Heart left ventricle (tissue), 16 donors: ENCODE measurements at regions of chr15 and their contacts with region 1.

Region 1: DNA sequence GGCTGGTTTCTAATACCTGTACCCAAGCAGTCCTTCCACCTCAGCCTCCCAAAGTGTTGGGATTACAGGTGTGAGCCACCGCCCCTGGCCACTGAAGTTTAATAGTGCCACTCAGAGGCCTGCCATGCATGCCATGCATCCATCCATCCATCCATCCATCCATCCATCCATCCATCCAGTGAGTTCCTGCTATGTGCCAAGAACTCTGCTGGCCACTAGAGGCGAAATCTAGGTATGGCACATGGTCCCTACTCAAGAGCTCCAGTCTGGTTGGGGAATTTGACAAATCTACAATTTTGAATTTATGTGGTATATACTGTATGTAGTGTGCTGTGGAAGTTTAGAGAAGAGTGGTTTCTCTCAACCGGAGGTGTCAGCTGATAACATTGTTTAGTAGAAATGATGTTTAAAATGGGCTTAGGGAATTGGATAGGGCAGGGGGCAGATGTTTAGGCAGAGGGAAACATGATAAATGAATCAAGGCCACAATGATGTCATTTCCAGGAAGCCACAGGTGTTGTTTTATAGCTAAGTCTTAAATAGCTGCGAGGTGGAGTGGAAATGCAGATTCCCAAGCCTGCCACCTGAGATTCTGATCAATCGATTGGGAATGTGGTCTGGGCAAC is 384.4 kb upstream of the C2CD4B start:
- DNase-seq: no peak
- ATAC-seq: no peak
- H3K4me3 ChIP-seq: no peak overlapping the region
- H3K27ac ChIP-seq: no peak overlapping the region
- H3K4me1 ChIP-seq: peaks cover 3 to 52% (median 32%) of the 10 kb centered on the region in 12 donors
- H3K27me3 ChIP-seq: no peaks in the 10 kb centered on the region
- CTCF ChIP-seq: peak; percentile 9 to 58 (median 31)
- POLR2A ChIP-seq: no peak

Region 2: DNA sequence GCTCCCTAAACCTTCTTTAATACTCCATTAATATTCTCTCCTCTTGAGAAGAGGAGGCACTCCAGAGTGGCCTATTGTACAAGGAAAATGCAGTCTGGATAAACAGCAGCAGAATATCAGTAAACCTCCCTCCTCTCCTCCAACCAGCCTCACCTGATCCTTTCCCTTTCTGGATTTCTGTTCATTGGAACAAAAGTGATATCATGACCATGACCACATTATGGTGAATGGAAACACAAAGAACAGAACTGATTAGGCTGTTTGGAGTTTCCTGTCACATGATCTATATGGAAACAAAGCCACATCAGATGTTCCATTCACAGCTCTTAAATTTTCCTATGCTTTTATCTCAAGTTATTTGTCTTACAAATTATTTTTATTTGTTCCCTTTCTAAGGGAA is 399.0 kb before region 1 on chr15:
- intact Hi-C with region 1: no loop called
- DNase-seq: no peak
- ATAC-seq: no peak
- H3K4me3 ChIP-seq: no peak overlapping the region
- H3K27ac ChIP-seq: no peak overlapping the region
- H3K4me1 ChIP-seq: no peaks in the 10 kb centered on the region
- H3K27me3 ChIP-seq: no peaks in the 10 kb centered on the region
- CTCF ChIP-seq: no peak
- POLR2A ChIP-seq: no peak

Region 3: GRCh38 chr15:62444104-62445022 is 105.1 kb before region 1 on chr15:
- intact Hi-C with region 1: no loop called
- DNase-seq: peak in 1 of 5 donors; percentile 55
- ATAC-seq: peak in 3 of 4 donors; percentile 44 to 77 (median 60)
- H3K4me3 ChIP-seq: no peak overlapping the region
- H3K27ac ChIP-seq: peak overlapping the region in 1 of 12 donors; percentile 15
- H3K4me1 ChIP-seq: peaks cover 0 to 44% (median 14%) of the 10 kb centered on the region in 12 donors
- H3K27me3 ChIP-seq: no peaks in the 10 kb centered on the region
- CTCF ChIP-seq: no peak
- POLR2A ChIP-seq: no peak

Region 4: DNA sequence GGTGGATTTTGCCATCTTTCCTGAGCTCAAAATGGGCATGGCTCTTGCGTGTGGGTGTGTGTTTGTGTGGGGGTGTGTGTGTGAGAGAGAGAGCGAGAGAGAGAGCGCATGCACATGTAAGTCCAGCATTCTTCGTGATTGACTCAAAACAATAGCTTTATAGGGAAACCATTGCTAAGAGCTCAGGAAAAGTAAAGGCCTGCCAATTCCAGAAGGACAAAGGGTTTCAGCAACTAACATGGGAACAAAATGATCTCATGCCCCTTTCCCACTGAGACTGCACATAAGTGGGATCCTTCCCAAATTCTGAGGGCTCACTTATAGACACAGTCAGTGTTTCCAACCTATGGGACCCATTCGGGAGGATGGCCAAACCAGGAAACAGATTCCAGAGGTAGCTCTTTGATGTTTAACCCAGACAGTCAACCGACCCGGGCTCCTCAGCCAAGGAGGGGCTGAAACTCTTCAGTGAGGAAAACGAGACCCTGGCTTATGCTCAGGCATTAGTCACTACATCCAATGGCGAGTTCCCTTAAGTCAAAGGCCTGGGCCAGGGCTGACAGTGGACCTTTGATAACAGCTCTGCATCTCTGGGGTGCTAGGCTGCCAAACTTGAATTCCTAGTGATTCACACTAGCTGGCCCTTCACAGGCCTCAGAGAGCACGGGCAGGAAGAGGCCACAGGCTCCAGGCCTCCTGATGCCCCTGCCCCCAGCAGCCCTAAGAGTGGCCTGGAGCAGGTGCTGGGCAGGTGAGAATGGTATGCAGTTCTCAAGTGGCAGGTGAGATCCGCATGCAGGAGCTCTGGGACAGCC is 79.4 kb before region 1 on chr15:
- intact Hi-C with region 1: loop called in 1 of 10 experiments (anchors 5 kb)
- DNase-seq: peak in 3 of 5 donors; percentile 47 to 77 (median 75)
- ATAC-seq: peak; percentile 19 to 84 (median 70)
- H3K4me3 ChIP-seq: no peak overlapping the region
- H3K27ac ChIP-seq: peak overlapping the region; percentile 48 to 81 (median 64)
- H3K4me1 ChIP-seq: peaks cover 0 to 83% (median 54%) of the 10 kb centered on the region in 12 donors
- H3K27me3 ChIP-seq: no peaks in the 10 kb centered on the region
- CTCF ChIP-seq: no peak
- POLR2A ChIP-seq: no peak